Psoas muscle (tissue), 8 donors: ENCODE measurements at regions of chr17 and their contacts with region 1.

Region 1: DNA sequence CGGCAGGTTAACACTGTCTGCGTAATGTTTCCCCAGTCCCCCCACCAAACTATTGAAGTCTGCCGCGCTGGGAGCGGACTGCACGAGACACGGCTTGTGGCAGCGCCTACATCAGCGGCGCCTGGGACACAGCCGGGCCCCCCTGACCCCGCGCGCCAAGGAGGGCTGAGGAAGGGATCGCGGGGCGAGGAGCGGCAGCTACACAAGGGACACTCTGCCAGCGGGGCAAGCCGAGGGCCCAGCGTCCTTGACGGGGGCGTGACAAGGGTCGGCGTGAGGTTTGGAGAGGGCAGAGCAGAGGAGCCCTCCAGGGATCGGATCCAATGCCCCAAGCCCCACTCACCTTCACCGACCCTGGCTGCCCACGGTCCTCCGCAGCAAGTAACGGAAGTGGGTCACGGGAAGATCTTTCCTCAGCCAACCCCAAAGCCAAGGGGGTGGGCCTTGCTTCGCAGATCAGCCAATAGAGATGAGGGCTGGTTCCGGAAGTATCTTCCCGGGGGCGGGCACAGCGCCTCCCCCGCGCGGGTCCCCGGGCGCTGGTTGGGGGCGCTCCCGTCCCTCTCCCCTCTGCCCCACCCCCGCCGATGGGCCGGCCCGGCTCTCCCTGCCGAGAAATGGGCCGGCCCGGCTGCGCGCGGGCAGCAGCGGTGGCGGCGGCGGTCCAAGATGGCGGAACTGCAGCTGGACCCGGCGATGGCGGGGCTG is at the starts of genes ATP5PD and KCTD2:
- DNase-seq: peak; percentile 98
- ATAC-seq: peak; percentile 96 to 99 (median 98)
- H3K4me3 ChIP-seq: peak within 1 kb of the TSS; percentile 95
- H3K27ac ChIP-seq: peak within 1 kb of the TSS; percentile 97
- H3K4me1 ChIP-seq: peaks cover 21% of the 10 kb centered on the region
- H3K27me3 ChIP-seq: no peaks in the 10 kb centered on the region
- CTCF ChIP-seq: no peak
- total RNA-seq, gene ATP5PD: 409 to 577 (median 500) TPM
- total RNA-seq, gene KCTD2: 29.2 to 38.7 (median 35.2) TPM

Region 2: GRCh38 chr17:74987418-74987908 is 59.3 kb before region 1 on chr17 and contains the start of gene CDR2L:
- intact Hi-C with region 1: no loop called
- DNase-seq: peak; percentile 97 to 98
- ATAC-seq: peak; percentile 95 to 97 (median 96)
- H3K4me3 ChIP-seq: peak within 1 kb of the TSS; percentile 78
- H3K27ac ChIP-seq: peak within 1 kb of the TSS; percentile 83
- H3K4me1 ChIP-seq: peaks cover 5% of the 10 kb centered on the region
- H3K27me3 ChIP-seq: peaks cover 0 to 12% (median 0%) of the 10 kb centered on the region in 3 donors
- CTCF ChIP-seq: no peak
- total RNA-seq, gene CDR2L: 1.4 to 3.4 (median 2.7) TPM

Region 3: GRCh38 chr17:75059369-75060345 is 12.9 kb after region 1 on chr17:
- intact Hi-C with region 1: no loop called
- DNase-seq: no peak
- ATAC-seq: peak; percentile 80 to 91 (median 86)
- H3K4me3 ChIP-seq: peak overlapping the region; percentile 3
- H3K27ac ChIP-seq: peak overlapping the region; percentile 81
- H3K4me1 ChIP-seq: peaks cover 10% of the 10 kb centered on the region
- H3K27me3 ChIP-seq: no peaks in the 10 kb centered on the region
- CTCF ChIP-seq: peak; percentile 45

Region 4: GRCh38 chr17:75199886-75200618 is 153.3 kb after region 1 on chr17:
- intact Hi-C with region 1: loop called in 1 of 2 experiments (anchors 5 kb)
- DNase-seq: no peak
- ATAC-seq: no peak
- H3K4me3 ChIP-seq: no peak overlapping the region
- H3K27ac ChIP-seq: no peak overlapping the region
- H3K4me1 ChIP-seq: no peaks in the 10 kb centered on the region
- H3K27me3 ChIP-seq: no peaks in the 10 kb centered on the region
- CTCF ChIP-seq: no peak